Prostate gland (tissue), 2 donors: ENCODE measurements at regions of chr21 and their contacts with region 1.

Region 1: DNA sequence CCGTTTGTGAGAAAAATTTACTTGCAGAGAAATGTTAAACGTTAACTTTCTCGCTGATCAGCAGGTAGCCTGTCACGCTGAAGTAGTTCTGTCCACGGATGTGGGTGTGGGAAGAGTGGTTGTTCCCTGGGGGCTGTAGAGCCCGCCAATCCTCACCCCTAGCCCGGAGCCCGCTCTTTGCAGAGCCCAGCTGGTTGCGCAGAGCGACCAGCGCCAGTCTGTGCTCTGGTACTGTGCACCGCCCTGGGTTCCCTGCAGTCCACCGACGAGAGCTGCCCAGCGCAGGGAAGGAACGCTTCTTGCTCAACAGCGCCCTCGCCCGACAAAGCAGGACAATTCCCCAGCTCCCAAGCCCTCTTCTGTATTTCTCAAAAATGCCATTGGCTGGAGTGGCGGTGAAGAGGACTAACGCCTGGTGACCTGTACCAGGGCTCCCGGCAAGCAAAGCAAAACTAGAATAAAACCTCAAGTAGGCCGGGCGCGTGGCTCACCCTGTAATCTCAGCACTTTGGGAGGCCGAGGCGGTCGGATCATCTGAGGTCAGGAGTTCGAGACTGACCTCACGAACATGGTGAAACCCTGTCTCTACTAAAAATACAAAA is 3.3 kb downstream of the RIPPLY3 start:
- DNase-seq: peak; percentile 76
- H3K4me3 ChIP-seq: no peak overlapping the region
- H3K27ac ChIP-seq: no peak overlapping the region
- H3K4me1 ChIP-seq: no peaks in the 10 kb centered on the region
- H3K27me3 ChIP-seq: no peaks in the 10 kb centered on the region
- CTCF ChIP-seq: peak; percentile 52 to 87 (median 73)
- POLR2A ChIP-seq: no peak

Region 2: GRCh38 chr21:36504067-36505058 is 505.5 kb before region 1 on chr21:
- intact Hi-C with region 1: loop called (anchors 10 kb)
- DNase-seq: peak; percentile 44
- H3K4me3 ChIP-seq: no peak overlapping the region
- H3K27ac ChIP-seq: peak overlapping the region in 1 of 2 donors; percentile 92
- H3K4me1 ChIP-seq: peaks cover 22% of the 10 kb centered on the region
- H3K27me3 ChIP-seq: no peaks in the 10 kb centered on the region
- CTCF ChIP-seq: peak; percentile 92 to 96 (median 94)
- POLR2A ChIP-seq: no peak

Region 3: DNA sequence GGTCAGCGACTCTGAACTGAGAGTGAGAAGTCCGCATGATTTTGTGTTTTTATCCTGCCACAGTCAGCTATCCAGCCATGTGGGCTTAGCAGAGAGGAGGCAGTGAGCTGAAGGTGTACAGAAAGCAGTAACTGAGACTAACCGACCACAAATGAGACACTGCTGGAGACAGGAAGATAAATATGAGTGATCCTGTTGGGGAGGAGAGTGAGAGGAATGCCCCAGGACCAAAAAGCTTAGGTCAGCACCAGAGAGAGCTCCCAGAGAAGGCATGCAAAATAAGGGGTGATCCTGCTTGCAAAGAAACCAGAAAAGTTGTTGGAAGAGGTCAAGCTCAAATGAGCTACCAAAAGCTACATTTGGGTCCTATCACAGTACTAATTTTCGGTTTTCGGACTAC is 107.0 kb before region 1 on chr21:
- intact Hi-C with region 1: no loop called
- DNase-seq: no peak
- H3K4me3 ChIP-seq: no peak overlapping the region
- H3K27ac ChIP-seq: no peak overlapping the region
- H3K4me1 ChIP-seq: no peaks in the 10 kb centered on the region
- H3K27me3 ChIP-seq: no peaks in the 10 kb centered on the region
- CTCF ChIP-seq: no peak
- POLR2A ChIP-seq: no peak

Region 4: GRCh38 chr21:36913247-36914169 is 96.3 kb before region 1 on chr21:
- intact Hi-C with region 1: no loop called
- DNase-seq: no peak
- H3K4me3 ChIP-seq: no peak overlapping the region
- H3K27ac ChIP-seq: no peak overlapping the region
- H3K4me1 ChIP-seq: peaks cover 10% of the 10 kb centered on the region
- H3K27me3 ChIP-seq: no peaks in the 10 kb centered on the region
- CTCF ChIP-seq: no peak
- POLR2A ChIP-seq: no peak

Region 5: GRCh38 chr21:37073417-37074196 is 63.8 kb after region 1 on chr21:
- intact Hi-C with region 1: no loop called
- DNase-seq: peak; percentile 47
- H3K4me3 ChIP-seq: peak overlapping the region; percentile 87 to 96
- H3K27ac ChIP-seq: peak overlapping the region; percentile 96 to 99
- H3K4me1 ChIP-seq: peaks cover 6% of the 10 kb centered on the region
- H3K27me3 ChIP-seq: no peaks in the 10 kb centered on the region
- CTCF ChIP-seq: peak in 1 of 4 experiments; percentile 24
- POLR2A ChIP-seq: peak; percentile 8

Region 6: DNA sequence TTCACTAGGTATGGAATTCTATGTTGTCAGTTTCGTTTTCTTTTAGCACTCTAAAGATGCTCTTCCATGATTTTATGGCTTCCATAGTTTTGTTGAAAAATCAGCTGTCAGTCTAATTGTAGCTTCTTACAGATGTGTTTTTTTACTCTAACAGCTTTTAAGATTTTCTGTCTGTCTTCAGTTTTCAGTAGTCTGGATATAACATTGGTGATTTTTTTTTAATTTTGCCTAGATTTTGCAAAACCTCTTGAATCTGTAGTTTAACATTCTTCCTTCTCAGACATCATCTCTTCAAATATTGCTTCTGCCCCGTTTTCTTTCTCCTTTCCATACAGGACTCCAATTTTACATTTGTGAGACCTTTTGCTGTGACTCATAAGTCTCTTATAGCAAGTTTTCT is 338.8 kb after region 1 on chr21:
- intact Hi-C with region 1: loop called (anchors 10 kb)
- DNase-seq: no peak
- H3K4me3 ChIP-seq: no peak overlapping the region
- H3K27ac ChIP-seq: no peak overlapping the region
- H3K4me1 ChIP-seq: no peaks in the 10 kb centered on the region
- H3K27me3 ChIP-seq: no peaks in the 10 kb centered on the region
- CTCF ChIP-seq: no peak
- POLR2A ChIP-seq: no peak